ENCODE measurements at regions of chr6 and their contacts with region 1.

Region 1: GRCh38 chr6:88870717-88871330 is 92.6 kb downstream of the RNGTT start:
- DNase-seq: peak; percentile 29
- H3K4me3 ChIP-seq: no peak overlapping the region
- H3K27ac ChIP-seq: no peak overlapping the region
- H3K27me3 ChIP-seq: no peaks in the 10 kb centered on the region
- CTCF ChIP-seq: peak; percentile 63

Region 2: DNA sequence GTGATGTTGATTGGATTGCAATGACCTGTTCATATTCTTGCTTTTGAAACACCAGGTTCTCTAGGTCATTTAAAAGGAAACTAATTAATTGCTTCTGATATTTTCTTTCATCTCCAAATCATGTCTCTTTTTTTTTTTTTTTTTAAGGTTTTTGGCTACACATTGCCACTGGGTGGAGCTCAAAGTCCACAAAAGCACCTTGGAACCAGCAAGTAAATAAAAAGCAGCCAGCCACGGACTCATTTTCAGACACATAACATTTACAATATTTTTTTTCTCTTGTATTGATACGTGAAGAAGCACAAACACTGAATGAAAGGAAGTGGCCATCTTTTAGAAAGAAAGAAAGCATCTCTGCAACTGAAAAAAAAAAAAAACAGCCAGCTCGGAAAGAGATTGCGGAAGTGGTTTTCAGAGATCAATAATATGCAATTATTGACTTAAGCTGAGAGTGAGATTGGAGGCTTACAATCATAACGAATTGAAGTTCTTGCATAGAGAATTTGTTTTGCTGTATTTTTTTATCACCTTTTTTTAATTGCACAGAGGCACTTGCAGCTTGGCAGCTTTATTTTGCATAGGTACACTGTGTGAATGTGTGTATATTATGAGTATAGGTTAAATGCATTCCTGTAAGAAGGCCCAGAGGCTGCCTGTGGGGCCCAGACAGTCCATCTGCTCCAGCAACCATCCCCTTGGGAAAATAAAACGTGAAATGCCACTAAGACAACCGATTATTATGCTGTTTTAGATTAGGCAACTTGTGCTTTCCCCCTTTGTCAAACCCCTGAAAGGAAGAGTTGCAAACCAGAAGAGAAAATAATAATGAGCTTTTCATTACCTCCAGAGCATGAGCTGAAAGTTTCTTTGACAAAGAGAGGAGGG is 1804.1 kb before region 1 on chr6:
- CTCF ChIA-PET with region 1: interaction called, 10 read pairs
- POLR2A ChIA-PET with region 1: no interaction called
- DNase-seq: peak; percentile 45
- H3K4me3 ChIP-seq: no peak overlapping the region
- H3K27ac ChIP-seq: no peak overlapping the region
- H3K27me3 ChIP-seq: peaks cover 13% of the 10 kb centered on the region
- CTCF ChIP-seq: peak; percentile 66

Region 3: GRCh38 chr6:87832025-87832825 is 1038.6 kb before region 1 on chr6:
- CTCF ChIA-PET with region 1: interaction called, 25 read pairs
- POLR2A ChIA-PET with region 1: no interaction called
- DNase-seq: no peak
- H3K4me3 ChIP-seq: peak overlapping the region; percentile 48
- H3K27ac ChIP-seq: no peak overlapping the region
- H3K27me3 ChIP-seq: no peaks in the 10 kb centered on the region
- CTCF ChIP-seq: peak; percentile 60

Region 4: GRCh38 chr6:88760091-88760490 is 110.7 kb before region 1 on chr6:
- CTCF ChIA-PET with region 1: no interaction called
- POLR2A ChIA-PET with region 1: no interaction called
- DNase-seq: no peak
- H3K4me3 ChIP-seq: no peak overlapping the region
- H3K27ac ChIP-seq: no peak overlapping the region
- H3K27me3 ChIP-seq: no peaks in the 10 kb centered on the region
- CTCF ChIP-seq: no peak

Region 5: GRCh38 chr6:88780714-88781389 is 90.0 kb before region 1 on chr6:
- CTCF ChIA-PET with region 1: interaction called, 30 read pairs
- POLR2A ChIA-PET with region 1: no interaction called
- DNase-seq: peak; percentile 46
- H3K4me3 ChIP-seq: no peak overlapping the region
- H3K27ac ChIP-seq: no peak overlapping the region
- H3K27me3 ChIP-seq: no peaks in the 10 kb centered on the region
- CTCF ChIP-seq: peak; percentile 91

Region 6: DNA sequence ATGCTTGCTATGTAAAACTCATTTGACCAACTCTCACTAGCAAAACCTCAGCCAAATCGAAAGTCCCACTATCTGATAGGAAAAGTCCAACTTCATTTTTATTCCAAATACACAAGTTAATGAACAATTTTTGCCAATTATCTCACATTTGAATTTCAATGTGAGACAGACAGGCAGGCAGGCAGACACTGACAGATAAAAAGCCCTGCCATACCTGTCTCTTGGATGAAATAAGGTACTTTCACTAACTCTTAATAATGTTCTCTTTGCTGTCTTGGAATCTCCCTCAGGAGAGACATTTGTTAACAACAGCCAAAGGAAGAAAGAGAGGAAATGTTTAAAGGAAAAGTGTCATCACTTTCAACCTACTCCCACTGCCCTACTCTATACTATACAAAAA is 10.6 kb after region 1 on chr6:
- CTCF ChIA-PET with region 1: interaction called, 12 read pairs
- POLR2A ChIA-PET with region 1: no interaction called
- DNase-seq: no peak
- H3K4me3 ChIP-seq: no peak overlapping the region
- H3K27ac ChIP-seq: no peak overlapping the region
- H3K27me3 ChIP-seq: no peaks in the 10 kb centered on the region
- CTCF ChIP-seq: no peak

Region 7: GRCh38 chr6:89117211-89118108 is 246.6 kb after region 1 on chr6 and contains the start of gene SRSF12:
- CTCF ChIA-PET with region 1: no interaction called
- POLR2A ChIA-PET with region 1: no interaction called
- DNase-seq: no peak
- H3K4me3 ChIP-seq: peak within 1 kb of the TSS; percentile 60
- H3K27ac ChIP-seq: no peak within 1 kb of the TSS
- H3K27me3 ChIP-seq: peaks cover 20% of the 10 kb centered on the region
- CTCF ChIP-seq: no peak
- polyA plus RNA-seq, gene SRSF12: 0.04 TPM in 2 replicates

Measured in AG04450 (cell line).